Sigmoid colon (tissue), 7 donors: ENCODE measurements at regions of chr5 and their contacts with region 1.

Region 1: DNA sequence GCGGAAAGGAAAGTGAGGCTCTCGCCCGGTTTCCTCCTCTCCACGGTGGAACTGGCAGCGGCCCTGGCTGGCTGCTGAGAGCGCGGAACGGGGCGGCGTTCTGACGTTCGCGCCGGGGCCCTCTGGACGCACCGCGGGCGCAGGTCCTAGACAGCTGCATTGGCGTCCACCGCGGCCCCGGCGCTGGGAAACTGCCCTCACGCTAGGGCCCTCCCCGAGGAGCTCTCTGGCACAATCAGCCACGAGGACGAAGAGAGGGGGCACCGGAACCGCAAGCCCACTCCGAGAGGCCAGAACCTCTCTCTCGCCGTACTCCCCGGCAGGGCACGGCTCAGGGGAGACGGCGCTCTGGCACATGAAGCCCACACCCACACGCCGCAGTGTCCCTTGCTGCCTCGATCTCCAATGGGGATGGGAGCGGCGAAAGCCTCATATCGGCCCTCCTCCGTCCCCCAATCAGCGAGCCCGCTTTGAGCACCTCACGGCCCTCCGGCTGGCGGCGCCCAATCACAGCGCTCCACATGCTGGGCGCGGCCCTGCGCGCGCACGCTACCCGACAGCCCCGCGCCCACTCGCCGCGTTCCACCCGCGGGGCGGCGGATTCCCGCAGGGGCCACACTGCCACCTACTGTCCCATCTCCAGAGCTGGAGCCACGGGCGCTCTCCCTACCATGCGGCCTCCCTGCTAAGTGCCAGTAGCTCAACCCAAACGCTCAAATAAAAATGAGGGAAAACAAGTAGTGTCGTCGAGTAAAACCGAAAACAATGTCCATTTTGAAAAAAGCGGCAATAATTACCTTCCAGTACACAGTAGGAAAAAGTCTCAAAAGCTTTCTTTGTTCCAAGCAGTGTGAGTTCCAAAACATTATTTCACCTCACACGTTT is 11.8 kb downstream of the MRPS27 start:
- DNase-seq: peak; percentile 99
- H3K4me3 ChIP-seq: peak overlapping the region; percentile 62 to 73 (median 66)
- H3K27ac ChIP-seq: peak overlapping the region; percentile 93 to 96 (median 95)
- H3K4me1 ChIP-seq: peaks cover 0 to 24% (median 18%) of the 10 kb centered on the region in 4 donors
- H3K27me3 ChIP-seq: no peaks in the 10 kb centered on the region
- CTCF ChIP-seq: peak; percentile 77 to 88 (median 82)
- EP300 ChIP-seq: no peak
- POLR2A ChIP-seq: peak; percentile 80 to 92

Region 2: GRCh38 chr5:71586941-71587765 is 721.1 kb before region 1 on chr5 and contains the start of gene MCCC2:
- intact Hi-C with region 1: loop called (anchors 2 kb)
- DNase-seq: peak; percentile 98
- H3K4me3 ChIP-seq: peak within 1 kb of the TSS; percentile 74 to 89 (median 82)
- H3K27ac ChIP-seq: peak within 1 kb of the TSS; percentile 78 to 86 (median 85)
- H3K4me1 ChIP-seq: peaks cover 0 to 23% (median 18%) of the 10 kb centered on the region in 4 donors
- H3K27me3 ChIP-seq: no peaks in the 10 kb centered on the region
- CTCF ChIP-seq: no peak
- EP300 ChIP-seq: no peak
- POLR2A ChIP-seq: peak in 1 of 2 donors; percentile 49
- total RNA-seq, gene MCCC2: 17.6 to 23.8 (median 19.5) TPM

Region 3: DNA sequence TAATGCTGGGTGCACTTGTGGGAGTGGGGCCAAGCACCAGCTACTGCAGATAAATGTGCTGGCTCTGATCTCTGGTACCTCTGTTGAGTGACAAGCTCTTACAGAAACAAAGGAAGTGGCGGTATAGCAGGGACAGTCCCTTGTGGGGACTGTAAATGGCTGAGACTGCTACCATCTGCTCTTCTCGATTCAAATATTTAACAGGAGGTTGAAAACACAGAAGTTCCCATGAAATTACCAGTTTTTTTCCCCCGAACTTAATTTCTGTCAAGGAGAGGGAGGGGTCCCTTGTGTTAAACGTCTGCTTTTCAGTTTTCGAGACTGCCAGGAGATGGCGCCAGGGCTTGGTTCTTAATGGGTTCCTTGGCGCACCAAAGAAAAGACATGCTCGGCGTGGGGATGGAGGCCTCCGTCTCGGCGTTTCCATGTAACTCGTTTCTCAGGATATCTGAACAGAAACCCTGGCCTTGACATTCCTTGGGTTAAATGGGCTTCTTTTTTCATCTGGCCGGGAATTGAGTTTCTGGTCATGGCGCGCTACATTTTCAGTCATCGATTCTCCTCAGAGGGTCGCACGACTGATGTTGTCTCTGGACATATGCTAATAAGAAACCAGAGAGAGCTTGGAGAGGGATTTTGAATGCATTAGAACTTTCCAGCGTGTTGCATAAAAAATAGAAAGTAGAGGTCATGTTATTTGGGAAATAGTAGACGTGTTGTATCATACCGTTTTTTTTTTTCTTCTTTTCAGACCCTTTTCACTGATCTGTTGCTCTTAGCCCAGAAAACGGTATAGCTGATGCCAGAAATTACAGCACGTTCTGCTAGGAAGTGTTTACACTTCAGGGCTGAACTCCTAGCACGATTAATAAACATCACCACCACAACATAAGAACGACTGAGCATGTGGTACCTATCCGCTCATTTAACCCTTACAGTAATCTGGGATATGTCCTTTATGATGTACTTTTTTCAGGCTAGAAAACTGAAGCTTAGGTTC is 525.1 kb before region 1 on chr5:
- intact Hi-C with region 1: loop called (anchors 1 kb)
- DNase-seq: peak; percentile 91
- H3K4me3 ChIP-seq: peak overlapping the region in 3 of 4 donors; percentile 22 to 39 (median 32)
- H3K27ac ChIP-seq: peak overlapping the region; percentile 58 to 71 (median 66)
- H3K4me1 ChIP-seq: peaks cover 0 to 16% (median 11%) of the 10 kb centered on the region in 4 donors
- H3K27me3 ChIP-seq: no peaks in the 10 kb centered on the region
- CTCF ChIP-seq: peak; percentile 80 to 86 (median 83)
- EP300 ChIP-seq: no peak
- POLR2A ChIP-seq: no peak

Region 4: DNA sequence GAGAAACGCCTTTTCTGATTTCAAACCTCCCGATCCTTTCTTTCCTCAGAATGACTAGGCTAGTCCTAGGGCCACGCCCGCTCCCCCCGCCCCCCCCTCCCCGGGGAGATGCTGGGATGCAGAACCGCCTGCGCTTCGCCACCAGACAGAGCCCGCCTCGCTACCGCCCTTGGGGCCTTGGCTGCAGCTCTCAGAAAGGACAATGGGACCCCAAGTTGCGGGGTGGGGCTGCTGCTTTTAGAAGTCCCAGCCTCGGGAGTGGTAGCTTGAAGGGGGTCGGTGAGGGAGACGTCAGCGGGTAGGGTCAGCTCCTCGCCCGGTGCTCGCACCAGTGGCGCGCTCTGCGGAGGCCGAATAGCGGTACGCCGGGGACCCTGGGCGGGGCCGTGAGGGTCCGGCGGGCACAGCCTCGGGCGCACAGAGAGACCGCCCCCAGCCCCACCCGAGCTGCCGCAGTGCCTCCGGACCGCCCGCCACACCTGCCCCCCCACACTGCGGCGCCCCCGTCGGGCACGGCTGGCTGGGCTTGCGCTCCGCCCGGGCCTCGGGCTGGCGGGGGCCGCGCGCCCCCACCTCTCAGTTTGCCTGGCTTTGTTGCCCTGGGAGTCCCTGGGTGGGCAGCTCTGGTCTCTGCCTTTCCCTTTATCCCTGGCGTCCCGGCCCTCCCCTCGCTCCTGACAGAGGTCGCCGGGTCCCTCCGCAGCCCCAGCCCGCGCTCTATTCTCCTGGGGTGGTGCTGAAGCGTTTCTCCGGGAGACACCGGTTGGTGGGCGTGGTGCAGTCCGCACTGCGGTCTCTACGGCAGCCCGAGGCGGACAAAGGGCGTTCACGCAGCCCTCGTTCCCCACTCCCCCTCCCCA is 199.8 kb before region 1 on chr5:
- intact Hi-C with region 1: loop called (anchors 1 kb)
- DNase-seq: peak; percentile 85
- H3K4me3 ChIP-seq: peak overlapping the region; percentile 68 to 89 (median 79)
- H3K27ac ChIP-seq: peak overlapping the region; percentile 75 to 87 (median 82)
- H3K4me1 ChIP-seq: peaks cover 0 to 32% (median 19%) of the 10 kb centered on the region in 4 donors
- H3K27me3 ChIP-seq: no peaks in the 10 kb centered on the region
- CTCF ChIP-seq: no peak
- EP300 ChIP-seq: no peak
- POLR2A ChIP-seq: peak in 1 of 2 donors; percentile 23

Region 5: DNA sequence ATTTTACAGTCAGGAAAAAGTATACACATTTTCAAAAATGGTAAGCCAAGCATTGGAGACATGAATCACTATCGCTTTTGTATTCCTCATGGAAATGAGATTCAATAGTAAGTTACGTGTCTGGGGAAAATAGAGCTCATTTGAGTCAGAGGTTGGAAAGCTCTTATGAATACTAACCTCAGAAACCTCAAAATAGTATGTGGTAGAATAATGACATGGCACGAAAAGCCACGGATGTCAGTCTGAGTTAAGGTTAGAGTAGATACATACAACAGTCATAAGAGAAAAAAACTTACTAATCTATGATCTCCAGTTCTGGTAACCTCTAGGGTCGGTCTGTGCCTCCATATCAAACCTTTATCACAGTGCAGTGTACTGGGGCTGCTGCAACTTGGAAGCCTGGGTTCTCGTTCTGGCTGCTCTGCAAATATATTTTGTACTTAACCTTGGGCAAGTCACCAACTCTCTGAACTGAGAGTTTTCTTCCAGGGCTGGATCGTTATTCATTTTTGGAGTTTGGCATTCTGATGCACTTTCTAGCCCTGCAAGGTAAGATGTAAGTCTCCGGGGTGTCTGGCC is 169.2 kb before region 1 on chr5:
- intact Hi-C with region 1: loop called (anchors 2 kb)
- DNase-seq: no peak
- H3K4me3 ChIP-seq: no peak overlapping the region
- H3K27ac ChIP-seq: peak overlapping the region; percentile 28 to 79 (median 48)
- H3K4me1 ChIP-seq: peaks cover 0 to 75% (median 49%) of the 10 kb centered on the region in 4 donors
- H3K27me3 ChIP-seq: no peaks in the 10 kb centered on the region
- CTCF ChIP-seq: no peak
- EP300 ChIP-seq: no peak
- POLR2A ChIP-seq: no peak

Region 6: DNA sequence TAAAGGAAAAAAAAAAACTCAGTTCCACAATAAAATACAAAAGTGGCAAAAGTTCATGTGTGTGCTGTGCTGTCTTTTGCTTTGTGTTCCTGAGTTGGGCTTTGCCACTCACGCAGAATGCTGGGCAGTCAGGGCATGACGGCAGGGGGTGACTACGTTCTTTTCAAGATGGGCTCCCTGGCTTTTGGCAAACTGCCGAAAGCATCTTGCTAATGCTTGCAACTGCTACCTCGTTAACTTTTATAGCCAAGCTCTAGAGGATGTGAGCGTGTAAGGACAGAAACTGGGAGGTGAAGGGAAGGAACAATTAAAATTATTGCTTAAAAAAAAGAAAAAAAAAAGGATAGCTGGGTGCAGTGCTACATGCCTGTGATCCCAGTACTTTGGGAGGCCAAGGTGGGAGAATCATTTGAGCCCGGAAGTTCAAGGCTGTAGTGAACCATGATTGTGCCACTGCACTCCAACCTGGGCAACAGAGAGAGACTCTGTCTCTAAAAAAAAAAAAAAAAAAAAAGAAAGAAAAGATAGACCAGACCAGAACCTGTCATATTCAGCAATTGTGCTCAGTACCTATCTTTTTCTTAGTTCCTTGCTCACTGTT is 98.6 kb before region 1 on chr5:
- intact Hi-C with region 1: loop called (anchors 5 kb)
- DNase-seq: peak; percentile 83
- H3K4me3 ChIP-seq: no peak overlapping the region
- H3K27ac ChIP-seq: peak overlapping the region in 1 of 4 donors; percentile 64
- H3K4me1 ChIP-seq: peaks cover 0 to 25% (median 21%) of the 10 kb centered on the region in 4 donors
- H3K27me3 ChIP-seq: no peaks in the 10 kb centered on the region
- CTCF ChIP-seq: no peak
- EP300 ChIP-seq: no peak
- POLR2A ChIP-seq: no peak

Region 7: DNA sequence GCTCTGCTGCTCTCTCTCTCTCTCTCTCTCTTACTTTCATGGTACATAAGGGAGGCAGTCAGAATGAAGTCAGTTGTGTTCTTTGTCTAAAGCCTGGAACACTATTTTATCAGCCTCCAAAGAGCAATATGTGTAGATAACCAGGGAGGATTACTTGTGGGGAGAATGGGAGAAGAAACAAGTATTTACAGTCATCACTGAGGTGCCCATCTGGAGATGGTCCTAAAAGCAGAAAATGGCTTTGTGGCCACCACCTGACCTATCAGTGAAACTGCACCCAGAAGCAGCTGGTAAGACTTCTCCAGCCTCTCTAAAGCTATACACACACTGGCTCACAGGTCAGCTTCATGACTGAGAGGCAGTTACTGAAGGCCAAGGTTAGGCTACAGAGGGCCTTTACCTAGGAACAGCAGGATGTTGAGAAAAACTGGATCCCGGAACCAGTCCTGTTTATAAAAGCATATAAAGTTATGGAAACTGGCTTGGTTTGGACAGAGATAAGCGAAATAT is 63.3 kb before region 1 on chr5:
- intact Hi-C with region 1: loop called (anchors 5 kb)
- DNase-seq: no peak
- H3K4me3 ChIP-seq: no peak overlapping the region
- H3K27ac ChIP-seq: peak overlapping the region; percentile 72 to 83 (median 76)
- H3K4me1 ChIP-seq: peaks cover 0 to 70% (median 56%) of the 10 kb centered on the region in 4 donors
- H3K27me3 ChIP-seq: no peaks in the 10 kb centered on the region
- CTCF ChIP-seq: peak in 1 of 4 experiments; percentile 19
- EP300 ChIP-seq: no peak
- POLR2A ChIP-seq: no peak